Panc1 (cell line): ENCODE measurements at regions of chr3 and their contacts with region 1.

Region 1: GRCh38 chr3:124986158-124987143 is 51.9 kb upstream of the MUC13 start:
- DNase-seq: no peak
- ATAC-seq: peak; percentile 83
- H3K4me3 ChIP-seq: no peak overlapping the region
- H3K27ac ChIP-seq: no peak overlapping the region
- H3K4me1 ChIP-seq: 0 out of 2 replicates have a peak, but pooled peaks cover 3% of the 10 kb centered on the region
- H3K27me3 ChIP-seq: no peaks in the 10 kb centered on the region
- CTCF ChIP-seq: peak; percentile 88

Region 2: DNA sequence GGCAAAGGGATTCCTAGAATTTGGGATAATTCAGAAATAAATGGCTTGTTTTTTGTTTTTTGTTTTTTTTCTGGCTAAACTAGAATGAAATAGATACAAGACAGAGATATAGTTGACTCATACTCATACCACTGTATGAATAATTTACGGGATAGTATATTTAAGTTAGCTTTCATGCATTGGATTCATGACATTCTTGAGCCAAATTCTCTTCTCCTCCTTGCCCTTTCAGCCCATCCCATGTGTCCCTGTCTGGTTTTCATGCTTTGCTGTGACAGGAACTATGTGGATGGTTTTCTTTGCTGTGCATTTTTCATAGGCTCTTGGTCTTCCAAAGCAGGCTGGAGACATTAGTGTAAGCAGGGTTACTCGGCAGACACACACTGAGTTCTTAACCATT is 322.8 kb before region 1 on chr3:
- CTCF ChIA-PET with region 1: no interaction called
- POLR2A ChIA-PET with region 1: no interaction called
- in situ Hi-C with region 1: no loop called
- intact Hi-C with region 1: no loop called
- DNase-seq: no peak
- ATAC-seq: no peak
- H3K4me3 ChIP-seq: no peak overlapping the region
- H3K27ac ChIP-seq: no peak overlapping the region
- H3K4me1 ChIP-seq: no peaks in the 10 kb centered on the region
- H3K27me3 ChIP-seq: peaks cover 21% of the 10 kb centered on the region
- CTCF ChIP-seq: no peak

Region 3: GRCh38 chr3:124761250-124761796 is 225.1 kb before region 1 on chr3:
- CTCF ChIA-PET with region 1: no interaction called
- POLR2A ChIA-PET with region 1: no interaction called
- in situ Hi-C with region 1: no loop called
- intact Hi-C with region 1: loop called (anchors 2 kb)
- DNase-seq: peak; percentile 70
- ATAC-seq: peak; percentile 77
- H3K4me3 ChIP-seq: 0 out of 4 replicates have a peak overlapping the region, but pooled peaks of 1 of the 2 experiments have one; percentile 12
- H3K27ac ChIP-seq: no peak overlapping the region; the same call in 1 of the 2 replicates
- H3K4me1 ChIP-seq: peaks cover 7% of the 10 kb centered on the region
- H3K27me3 ChIP-seq: no peaks in the 10 kb centered on the region
- CTCF ChIP-seq: peak; percentile 99

Region 4: DNA sequence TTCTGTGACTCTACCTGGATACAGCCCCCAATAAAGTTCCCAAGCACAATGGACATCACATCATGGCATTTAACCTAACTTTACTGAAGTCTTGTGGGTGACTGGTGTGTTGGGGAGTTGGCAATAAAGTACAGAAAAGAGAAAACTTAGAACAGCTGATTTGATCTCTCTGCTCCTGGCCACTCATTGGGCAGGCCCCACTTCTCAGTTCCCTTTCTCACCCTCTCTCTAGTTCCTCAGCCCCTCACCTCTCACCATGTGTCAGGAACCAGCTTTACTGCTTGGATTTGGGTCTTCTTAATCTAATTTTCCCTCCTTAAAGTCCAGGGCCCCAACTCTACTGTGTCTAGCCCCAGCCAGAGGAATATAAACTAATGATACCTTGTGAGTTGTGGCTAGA is 51.2 kb before region 1 on chr3:
- CTCF ChIA-PET with region 1: no interaction called
- POLR2A ChIA-PET with region 1: no interaction called
- in situ Hi-C with region 1: no loop called
- intact Hi-C with region 1: loop called (anchors 10 kb)
- DNase-seq: no peak
- ATAC-seq: no peak
- H3K4me3 ChIP-seq: no peak overlapping the region
- H3K27ac ChIP-seq: no peak overlapping the region
- H3K4me1 ChIP-seq: no peaks in the 10 kb centered on the region
- H3K27me3 ChIP-seq: no peaks in the 10 kb centered on the region
- CTCF ChIP-seq: no peak